Activated CD4-positive, alpha-beta memory T cell treated with anti-CD3 and anti-CD28 coated beads, Interleukin-2, amount 10 ng/mL, durations not matched to agents 7 days and 5 days (primary cell): ENCODE measurements at regions of chr6 and their contacts with region 1.

Region 1: GRCh38 chr6:26596579-26597388 is at the start of gene ABT1:
- DNase-seq: peak; percentile 98
- H3K4me3 Mint-ChIP-seq: no peak within 1 kb of the TSS
- H3K27ac Mint-ChIP-seq: no peak within 1 kb of the TSS
- H3K4me1 Mint-ChIP-seq: peaks cover 37% of the 10 kb centered on the region
- H3K27me3 Mint-ChIP-seq: peaks cover 30% of the 10 kb centered on the region
- total RNA-seq, gene ABT1: 26.3 to 26.8 TPM

Region 2: DNA sequence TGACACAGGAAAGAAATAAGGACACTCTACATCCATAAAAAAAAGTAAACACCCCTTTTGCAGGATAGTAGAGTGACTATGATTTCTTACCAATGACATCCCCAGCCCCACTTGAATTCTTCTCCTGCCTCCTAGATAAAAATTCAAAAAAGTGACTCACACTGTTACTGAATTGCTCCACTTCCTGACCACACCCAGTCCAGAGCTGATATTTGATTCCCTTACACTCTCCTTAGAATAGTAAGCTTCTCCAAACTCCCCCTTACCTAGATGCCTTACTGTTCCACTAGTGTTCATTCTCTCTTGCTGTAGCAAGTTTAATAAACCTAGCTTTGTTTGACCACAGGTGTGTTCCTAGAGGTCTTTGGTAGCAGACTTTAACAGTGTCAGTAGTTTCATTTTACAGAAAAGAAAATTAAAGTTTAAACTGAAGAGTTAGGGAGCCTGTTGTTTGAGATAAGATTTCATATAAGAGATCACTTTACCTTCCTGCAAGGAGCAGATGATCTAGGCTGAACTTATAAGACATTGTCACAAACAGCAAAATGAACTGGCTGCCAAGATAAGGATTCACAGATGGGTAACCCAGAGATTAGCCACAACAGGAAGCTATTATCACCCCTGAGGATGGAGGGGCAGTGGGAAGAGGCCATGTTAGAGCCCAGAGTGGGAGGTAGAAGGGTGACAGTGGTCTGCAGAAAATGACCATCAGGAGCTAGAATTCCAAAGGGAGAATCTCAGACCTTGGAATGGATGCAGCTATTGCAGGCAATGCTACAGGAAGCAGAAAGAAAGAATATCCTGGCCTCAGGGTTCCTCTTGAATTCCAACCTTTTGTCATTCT is 260.2 kb before region 1 on chr6:
- CTCF ChIA-PET with region 1: interaction called, 31 read pairs
- POLR2A ChIA-PET with region 1: interaction called, 4 read pairs
- DNase-seq: no peak
- H3K4me3 Mint-ChIP-seq: no peak overlapping the region
- H3K27ac Mint-ChIP-seq: peak overlapping the region; percentile 22
- H3K4me1 Mint-ChIP-seq: peaks cover 53% of the 10 kb centered on the region
- H3K27me3 Mint-ChIP-seq: peaks cover 13% of the 10 kb centered on the region

Region 3: DNA sequence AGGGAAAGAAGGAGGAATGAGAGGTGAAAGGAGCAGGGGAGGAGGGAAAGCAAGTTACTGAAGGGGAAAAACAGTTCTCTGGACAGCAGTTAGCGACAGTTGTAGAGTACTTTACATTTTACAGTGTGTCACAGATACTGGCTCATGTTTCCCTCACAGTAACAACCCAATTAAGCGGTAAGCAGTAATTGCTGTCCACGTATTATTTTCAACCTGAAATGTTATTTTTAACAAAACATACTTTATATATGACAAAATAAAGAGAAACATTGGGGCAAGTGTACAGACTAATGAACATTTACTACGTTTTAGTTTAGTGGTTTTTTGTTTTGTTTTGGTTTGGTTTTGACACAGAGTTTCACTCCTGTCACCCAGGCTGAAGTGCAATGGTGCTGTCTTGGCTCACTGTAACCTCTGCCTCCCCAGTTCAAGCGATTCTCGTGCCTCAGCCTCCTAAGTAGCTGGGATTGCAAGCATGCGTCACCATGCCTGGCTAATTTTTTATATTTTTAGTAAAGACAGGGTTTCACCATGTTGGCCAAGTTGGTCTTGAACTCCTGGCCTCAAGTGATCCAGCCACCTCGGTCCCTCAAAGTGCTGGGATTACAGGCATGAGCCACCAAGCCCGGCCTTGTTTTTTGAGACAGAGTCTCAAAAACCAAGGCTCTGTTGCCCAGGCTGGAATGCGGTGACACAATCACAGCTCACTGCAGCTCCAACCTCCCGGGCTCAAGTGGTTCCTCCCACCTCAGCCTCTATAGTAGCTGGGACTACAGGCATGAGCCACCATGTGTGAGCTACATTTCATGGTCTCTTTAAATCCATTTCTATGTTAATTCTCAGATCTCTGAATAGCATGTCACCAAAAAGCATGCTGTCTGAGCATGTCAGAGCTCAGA is 254.4 kb before region 1 on chr6:
- CTCF ChIA-PET with region 1: interaction called, 31 read pairs
- POLR2A ChIA-PET with region 1: interaction called, 4 read pairs
- DNase-seq: peak; percentile 39
- H3K4me3 Mint-ChIP-seq: peak overlapping the region; percentile 80
- H3K27ac Mint-ChIP-seq: peak overlapping the region; percentile 56
- H3K4me1 Mint-ChIP-seq: peaks cover 33% of the 10 kb centered on the region
- H3K27me3 Mint-ChIP-seq: peaks cover 15% of the 10 kb centered on the region

Region 4: GRCh38 chr6:26568601-26569432 is 28.0 kb before region 1 on chr6:
- CTCF ChIA-PET with region 1: interaction called, 40 read pairs
- POLR2A ChIA-PET with region 1: interaction called, 10 read pairs
- DNase-seq: peak; percentile 98
- H3K4me3 Mint-ChIP-seq: peak overlapping the region; percentile 92
- H3K27ac Mint-ChIP-seq: peak overlapping the region; percentile 87
- H3K4me1 Mint-ChIP-seq: peaks cover 29% of the 10 kb centered on the region
- H3K27me3 Mint-ChIP-seq: peaks cover 11% of the 10 kb centered on the region

Region 5: DNA sequence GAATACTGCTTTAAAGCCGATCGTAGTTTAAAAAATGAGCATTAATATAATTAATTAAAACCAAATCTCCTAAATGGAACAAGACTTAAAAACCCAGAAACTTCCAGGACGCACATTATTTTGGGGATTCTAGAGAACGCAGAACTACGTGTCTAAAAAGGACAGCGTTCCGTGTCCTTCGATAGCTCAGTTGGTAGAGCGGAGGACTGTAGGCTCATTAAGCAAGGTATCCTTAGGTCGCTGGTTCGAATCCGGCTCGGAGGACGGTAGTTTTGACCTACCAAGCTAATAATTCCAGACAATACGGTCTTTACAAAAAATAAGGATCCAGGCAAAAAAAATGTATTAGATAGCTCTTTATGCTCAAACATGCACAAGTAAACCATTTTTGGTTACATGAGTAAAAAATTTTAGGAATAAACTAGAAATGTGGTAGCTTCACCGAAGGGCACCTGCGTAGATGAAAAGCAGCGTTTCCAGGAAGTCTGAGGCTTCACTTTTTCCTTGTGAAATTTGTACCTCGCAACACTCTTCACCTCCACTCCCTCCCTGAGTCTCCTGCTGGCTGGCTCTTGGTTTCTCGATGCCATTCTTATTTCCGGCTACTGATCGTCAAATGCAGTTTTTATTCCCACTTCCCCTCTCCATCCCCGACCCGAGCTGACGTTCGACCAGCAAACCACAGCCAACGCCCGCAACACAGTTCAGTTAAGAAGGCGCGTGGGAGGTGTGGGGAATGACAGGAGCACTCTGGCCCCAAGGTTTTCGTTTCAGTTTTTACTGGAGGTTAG is 19.7 kb before region 1 on chr6:
- CTCF ChIA-PET with region 1: interaction called, 43 read pairs
- POLR2A ChIA-PET with region 1: interaction called, 8 read pairs
- DNase-seq: peak; percentile 64
- H3K4me3 Mint-ChIP-seq: peak overlapping the region; percentile 82
- H3K27ac Mint-ChIP-seq: peak overlapping the region; percentile 44
- H3K4me1 Mint-ChIP-seq: peaks cover 23% of the 10 kb centered on the region
- H3K27me3 Mint-ChIP-seq: peaks cover 29% of the 10 kb centered on the region